ENCODE measurements at regions of chrX and their contacts with region 1.

Region 1: DNA sequence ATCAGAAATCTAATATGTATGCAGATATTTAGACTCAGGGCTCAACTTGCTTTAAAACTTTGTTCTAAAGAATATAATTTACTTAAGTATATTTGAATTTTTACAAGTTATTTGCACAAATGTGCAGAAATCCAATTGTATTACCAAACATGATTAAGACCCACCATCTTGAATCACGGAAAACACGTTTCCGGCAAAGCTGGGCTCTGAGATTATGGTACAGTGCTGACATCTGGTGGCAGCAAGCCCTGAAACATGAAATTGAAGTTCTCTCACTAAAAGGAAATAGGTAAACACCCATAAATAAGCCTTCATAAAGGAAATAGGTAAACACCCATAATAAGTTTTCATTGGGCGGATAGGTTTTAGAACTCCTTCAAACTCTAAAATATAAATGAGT is 98.3 kb upstream of the MAOA start:
- DNase-seq: peak; percentile 72
- ATAC-seq: no peak
- H3K4me3 Mint-ChIP-seq: no peak overlapping the region
- H3K27ac Mint-ChIP-seq: no peak overlapping the region
- H3K4me1 Mint-ChIP-seq: no peaks in the 10 kb centered on the region
- H3K27me3 Mint-ChIP-seq: no peaks in the 10 kb centered on the region

Region 2: GRCh38 chrX:41781502-41781901 is 1776.3 kb before region 1 on chrX:
- CTCF ChIA-PET with region 1: interaction called, 4 read pairs
- POLR2A ChIA-PET with region 1: no interaction called
- intact Hi-C with region 1: loop called (anchors 2 to 10 kb)
- DNase-seq: no peak
- ATAC-seq: no peak
- H3K4me3 Mint-ChIP-seq: no peak overlapping the region
- H3K27ac Mint-ChIP-seq: no peak overlapping the region
- H3K4me1 Mint-ChIP-seq: peaks cover 15% of the 10 kb centered on the region
- H3K27me3 Mint-ChIP-seq: no peaks in the 10 kb centered on the region

Region 3: DNA sequence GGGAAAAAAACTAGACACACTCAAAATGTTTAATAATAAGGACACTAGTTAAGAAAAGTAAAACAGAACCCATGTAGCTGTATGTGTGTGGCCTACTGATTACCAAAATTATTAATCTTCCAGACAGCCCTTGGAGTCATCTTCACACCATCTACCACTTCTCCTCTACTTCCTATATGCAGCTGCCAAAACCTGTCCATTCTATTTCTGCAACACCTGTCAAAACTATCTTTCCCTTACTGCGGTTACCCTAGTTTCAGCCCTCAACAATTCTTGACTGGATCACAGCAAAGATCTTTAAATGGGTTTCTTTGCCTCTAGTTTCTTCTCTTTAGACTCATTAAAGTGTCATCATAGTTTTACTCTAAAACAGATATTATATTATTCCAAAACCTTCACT is 1761.2 kb before region 1 on chrX:
- CTCF ChIA-PET with region 1: no interaction called
- POLR2A ChIA-PET with region 1: no interaction called
- intact Hi-C with region 1: loop called in 1 of 2 experiments (anchors 5 kb)
- DNase-seq: no peak
- ATAC-seq: no peak
- H3K4me3 Mint-ChIP-seq: no peak overlapping the region
- H3K27ac Mint-ChIP-seq: peak overlapping the region; percentile 60
- H3K4me1 Mint-ChIP-seq: peaks cover 33% of the 10 kb centered on the region
- H3K27me3 Mint-ChIP-seq: no peaks in the 10 kb centered on the region

Region 4: DNA sequence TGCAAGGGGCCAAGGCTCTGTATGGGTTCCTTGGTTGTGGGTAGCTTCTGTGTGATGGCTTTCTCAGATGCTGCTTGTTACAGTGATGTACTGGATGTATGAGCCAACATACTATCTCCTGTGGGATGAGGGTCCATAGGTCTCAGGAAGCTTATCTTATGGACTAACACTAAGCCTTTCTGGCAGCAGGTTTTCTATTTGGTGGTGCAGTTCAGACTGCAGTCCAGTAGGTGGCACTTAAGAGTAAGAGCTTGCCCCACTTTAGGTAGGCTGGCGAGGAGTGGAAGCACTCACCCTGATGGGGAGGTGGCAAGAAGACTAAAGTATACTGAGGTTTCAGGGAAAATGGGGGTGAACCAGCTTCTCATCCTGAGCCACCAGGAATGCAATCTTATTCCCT is 208.4 kb before region 1 on chrX:
- CTCF ChIA-PET with region 1: interaction called, 14 read pairs
- POLR2A ChIA-PET with region 1: no interaction called
- intact Hi-C with region 1: loop called (anchors 1 kb)
- DNase-seq: peak; percentile 50
- ATAC-seq: no peak
- H3K4me3 Mint-ChIP-seq: no peak overlapping the region
- H3K27ac Mint-ChIP-seq: no peak overlapping the region
- H3K4me1 Mint-ChIP-seq: peaks cover 12% of the 10 kb centered on the region
- H3K27me3 Mint-ChIP-seq: peaks cover 2% of the 10 kb centered on the region

Region 5: GRCh38 chrX:43750248-43750676 is 192.5 kb after region 1 on chrX:
- CTCF ChIA-PET with region 1: interaction called, 10 read pairs
- POLR2A ChIA-PET with region 1: no interaction called
- intact Hi-C with region 1: loop called (anchors 1 kb)
- DNase-seq: peak; percentile 51
- ATAC-seq: peak; percentile 68
- H3K4me3 Mint-ChIP-seq: no peak overlapping the region
- H3K27ac Mint-ChIP-seq: no peak overlapping the region
- H3K4me1 Mint-ChIP-seq: no peaks in the 10 kb centered on the region
- H3K27me3 Mint-ChIP-seq: no peaks in the 10 kb centered on the region